GM12878 (cell line): ENCODE measurements at regions of chr13 and their contacts with region 1.

Region 1: GRCh38 chr13:113296842-113297369 is at the start of gene LAMP1:
- DNase-seq: peak; percentile 87
- ATAC-seq: peak; percentile 84
- H3K4me3 ChIP-seq: peak within 1 kb of the TSS; percentile 85
- H3K27ac ChIP-seq: peak within 1 kb of the TSS; percentile 87
- H3K4me1 ChIP-seq: no peaks in the 10 kb centered on the region
- H3K27me3 ChIP-seq: peaks cover 0 to 2% of the 10 kb centered on the region in 2 experiments; a peak in 2 of 4 replicates
- CTCF ChIP-seq: no peak
- EP300 ChIP-seq: peak in 1 of 2 experiments; percentile 91; a peak in 2 of 4 replicates
- POLR2A ChIP-seq: peak; percentile 89
- RAD21 ChIP-seq: peak; percentile 29; the same call in 1 of the 2 replicates
- polyA plus RNA-seq, gene LAMP1: 2.5 to 8.4 TPM

Region 2: DNA sequence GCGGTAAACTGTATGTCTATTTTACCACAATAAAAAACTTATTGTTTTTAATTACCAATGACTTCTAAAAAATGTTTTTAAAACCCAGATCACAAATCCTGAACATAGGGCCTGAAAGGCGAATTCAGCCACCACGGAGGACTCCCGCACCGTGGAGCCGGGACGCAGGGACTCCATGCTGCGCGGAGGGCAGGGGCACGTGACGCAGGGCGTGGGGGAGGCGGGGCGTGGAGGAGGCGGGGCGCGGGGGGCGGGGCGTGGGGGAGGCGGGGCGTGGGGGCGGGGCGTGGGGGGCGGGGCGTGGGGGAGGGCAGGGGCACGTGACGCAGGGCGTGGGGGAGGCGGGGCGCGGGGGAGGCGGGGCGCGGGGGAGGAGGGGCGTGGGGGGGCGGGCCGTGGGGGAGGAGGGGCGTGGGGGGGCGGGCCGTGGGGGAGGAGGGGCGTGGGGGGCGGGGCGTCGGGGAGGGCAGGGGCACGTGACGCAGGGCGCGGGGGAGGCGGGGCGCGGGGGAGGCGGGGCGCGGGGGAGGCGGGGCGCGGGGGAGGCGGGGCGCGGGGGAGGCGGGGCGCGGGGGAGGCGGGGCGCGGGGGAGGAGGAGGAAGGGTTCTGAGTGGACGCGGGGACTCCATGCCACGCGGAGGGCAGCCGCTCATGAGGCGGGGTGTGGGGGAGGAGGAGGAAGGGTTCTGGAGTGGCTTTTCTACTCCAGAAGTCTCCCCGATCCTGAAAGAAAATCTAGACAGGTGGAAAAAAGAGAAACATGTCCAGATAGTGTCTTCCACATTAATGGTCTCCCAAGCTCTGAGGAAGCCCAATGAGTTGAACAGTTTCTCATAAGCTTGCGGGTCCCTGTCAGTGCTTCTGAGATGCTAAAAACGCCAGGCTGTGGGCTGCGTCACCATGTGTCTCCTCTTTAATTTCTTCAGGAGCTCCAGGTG is 142.8 kb before region 1 on chr13:
- CTCF ChIA-PET with region 1: no interaction called
- POLR2A ChIA-PET with region 1: no interaction called
- RAD21 ChIA-PET with region 1: no interaction called
- SMC1A ChIA-PET with region 1: no interaction called
- in situ Hi-C with region 1: no loop called
- intact Hi-C with region 1: no loop called
- DNase-seq: peak; percentile 3
- ATAC-seq: peak; percentile 88
- H3K4me3 ChIP-seq: peak overlapping the region; percentile 46
- H3K27ac ChIP-seq: no peak overlapping the region
- H3K4me1 ChIP-seq: peaks cover 8% of the 10 kb centered on the region
- H3K27me3 ChIP-seq: peaks cover 0 to 5% of the 10 kb centered on the region in 2 experiments; a peak in 3 of 4 replicates
- CTCF ChIP-seq: no peak
- EP300 ChIP-seq: no peak
- POLR2A ChIP-seq: peak; percentile 76
- RAD21 ChIP-seq: no peak

Region 3: DNA sequence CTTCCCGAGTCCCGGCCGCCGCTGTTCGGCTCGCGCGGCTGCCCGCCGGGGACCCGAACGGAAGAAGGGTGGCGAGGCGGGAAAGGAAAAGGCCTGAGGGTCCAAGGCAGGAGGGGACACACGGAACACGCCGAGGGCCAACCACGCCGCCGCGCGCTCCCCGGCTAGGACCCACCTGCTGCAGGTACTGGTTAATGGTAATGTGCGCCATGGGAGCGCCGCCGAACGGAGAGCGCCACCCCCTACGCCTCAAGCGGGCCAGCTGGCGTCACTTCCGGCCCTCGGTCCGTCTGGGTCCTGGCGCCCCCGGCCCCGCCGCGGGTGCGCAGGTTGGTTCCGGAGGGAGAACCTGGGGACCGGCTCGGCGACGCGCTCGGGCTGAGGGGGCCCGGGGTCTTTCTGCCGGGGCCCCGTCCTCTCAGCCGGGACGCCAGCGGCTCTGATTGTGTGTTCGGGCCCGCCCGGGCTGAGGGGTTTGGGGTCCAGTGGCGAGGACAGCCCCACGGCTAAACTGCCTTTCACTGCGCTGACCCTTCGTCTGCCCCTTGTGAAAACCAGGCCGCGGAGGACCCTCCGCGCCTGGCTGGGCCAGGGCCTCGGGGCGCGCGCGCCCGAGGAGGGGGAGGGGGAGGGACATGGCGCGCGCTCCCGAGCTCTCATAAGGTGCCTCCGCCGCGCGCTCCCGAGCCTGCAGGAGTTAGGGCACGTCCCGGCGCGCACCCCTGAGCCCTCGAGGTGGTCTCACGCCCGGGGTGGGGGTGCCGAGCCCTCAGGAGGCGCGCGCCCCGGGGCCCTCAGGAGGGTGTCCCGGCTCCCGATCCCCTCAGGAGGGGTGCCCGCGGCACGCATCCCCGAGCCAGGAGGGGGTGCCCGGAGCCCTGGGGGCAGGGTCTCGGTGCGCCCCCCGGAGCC is 88.2 kb before region 1 on chr13 and contains the start of gene PCID2:
- CTCF ChIA-PET with region 1: interaction called, 3 read pairs
- POLR2A ChIA-PET with region 1: interaction called, 5 read pairs
- RAD21 ChIA-PET with region 1: no interaction called
- SMC1A ChIA-PET with region 1: interaction called, 3 read pairs
- in situ Hi-C with region 1: no loop called
- intact Hi-C with region 1: loop called (anchors 1 kb)
- DNase-seq: peak; percentile 48
- ATAC-seq: peak; percentile 85
- H3K4me3 ChIP-seq: peak within 1 kb of the TSS; percentile 87
- H3K27ac ChIP-seq: peak within 1 kb of the TSS; percentile 95
- H3K4me1 ChIP-seq: peaks cover 6% of the 10 kb centered on the region
- H3K27me3 ChIP-seq: no peaks in the 10 kb centered on the region
- CTCF ChIP-seq: 0 out of 6 replicates have a peak, but pooled peaks of 1 of the 3 experiments have one; percentile 2
- EP300 ChIP-seq: no peak
- POLR2A ChIP-seq: peak; percentile 89
- RAD21 ChIP-seq: no peak
- polyA plus RNA-seq, gene PCID2: 65.4 to 71.8 TPM

Region 4: DNA sequence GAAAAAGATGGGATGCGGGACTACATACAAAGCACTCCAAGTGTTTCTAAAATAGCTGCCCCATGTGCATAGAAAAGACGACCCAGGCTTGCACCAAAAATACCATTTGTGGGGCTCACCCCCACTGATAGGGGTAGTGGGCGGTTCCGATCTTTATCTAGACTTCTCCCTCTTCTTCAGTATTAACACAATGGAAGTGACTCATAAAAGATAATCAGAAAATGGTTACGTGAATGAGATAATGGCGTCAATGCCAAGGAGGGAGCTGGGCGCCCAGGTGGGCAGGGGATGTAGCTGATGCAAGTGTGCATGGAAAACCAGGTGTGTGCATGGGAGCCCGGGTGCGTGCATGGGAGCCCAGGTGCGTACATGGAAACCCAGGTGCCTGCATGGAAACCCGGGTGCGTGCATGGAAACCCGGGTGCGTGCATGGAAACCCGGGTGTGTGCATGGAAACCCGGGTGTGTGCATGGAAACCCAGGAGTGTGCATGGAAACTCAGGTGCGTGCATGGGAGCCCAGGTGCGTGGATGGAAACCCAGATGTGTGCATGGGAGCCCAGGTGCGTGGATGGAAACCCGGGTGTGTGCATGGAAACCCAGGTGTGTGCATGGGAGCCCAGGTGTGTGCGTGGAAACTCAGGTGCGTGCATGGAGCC is 32.9 kb after region 1 on chr13:
- CTCF ChIA-PET with region 1: no interaction called
- POLR2A ChIA-PET with region 1: no interaction called
- RAD21 ChIA-PET with region 1: no interaction called
- SMC1A ChIA-PET with region 1: no interaction called
- in situ Hi-C with region 1: no loop called
- intact Hi-C with region 1: no loop called
- DNase-seq: no peak
- ATAC-seq: no peak
- H3K4me3 ChIP-seq: no peak overlapping the region
- H3K27ac ChIP-seq: no peak overlapping the region
- H3K4me1 ChIP-seq: no peaks in the 10 kb centered on the region
- H3K27me3 ChIP-seq: no peaks in the 10 kb centered on the region
- CTCF ChIP-seq: no peak
- EP300 ChIP-seq: no peak
- POLR2A ChIP-seq: no peak
- RAD21 ChIP-seq: no peak

Region 5: DNA sequence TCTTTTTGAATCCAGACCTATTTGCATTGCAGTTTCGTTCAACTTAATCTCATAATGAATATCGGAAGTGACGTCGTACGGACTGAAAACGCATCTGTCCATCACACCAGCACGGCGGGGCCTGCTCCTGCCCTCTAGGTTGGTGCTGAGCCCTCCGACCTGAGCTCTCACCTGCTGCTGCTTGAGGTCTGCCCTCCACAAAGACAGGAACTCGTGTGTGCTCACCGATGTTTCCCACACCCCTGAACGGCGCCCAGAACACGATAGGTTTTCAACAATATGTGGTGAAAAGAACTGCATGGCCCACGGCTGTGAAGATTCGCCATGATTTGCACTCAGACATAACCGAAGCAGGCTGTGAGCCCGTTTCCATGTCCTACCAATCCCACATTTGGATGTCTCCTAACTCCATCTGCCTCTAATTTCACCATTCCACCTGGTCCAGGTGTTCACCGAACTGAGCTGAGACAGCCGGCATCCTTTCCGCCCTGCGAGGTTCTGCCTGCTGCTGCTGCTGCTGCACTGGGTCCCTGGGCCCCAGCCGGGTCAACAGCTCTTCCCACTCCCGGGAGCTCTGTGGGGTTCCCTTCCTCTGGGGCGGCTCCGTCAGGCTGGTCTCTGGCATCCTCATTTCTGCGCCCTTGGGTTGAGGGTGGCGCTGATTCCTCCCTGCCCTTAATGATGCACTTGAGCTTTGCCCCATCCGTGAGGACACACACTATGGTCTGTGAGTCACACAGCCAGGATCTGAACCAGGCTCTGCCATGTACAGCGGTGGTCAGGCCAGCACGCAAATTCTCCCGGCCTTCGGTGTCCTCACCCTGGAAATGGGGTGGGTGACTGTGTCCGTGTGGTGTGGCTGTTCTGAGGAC is 46.1 kb after region 1 on chr13:
- CTCF ChIA-PET with region 1: no interaction called
- POLR2A ChIA-PET with region 1: no interaction called
- RAD21 ChIA-PET with region 1: no interaction called
- SMC1A ChIA-PET with region 1: no interaction called
- in situ Hi-C with region 1: no loop called
- intact Hi-C with region 1: no loop called
- DNase-seq: no peak
- ATAC-seq: no peak
- H3K4me3 ChIP-seq: no peak overlapping the region
- H3K27ac ChIP-seq: no peak overlapping the region
- H3K4me1 ChIP-seq: no peaks in the 10 kb centered on the region
- H3K27me3 ChIP-seq: no peaks in the 10 kb centered on the region
- CTCF ChIP-seq: no peak
- EP300 ChIP-seq: no peak
- POLR2A ChIP-seq: no peak
- RAD21 ChIP-seq: no peak

Region 6: GRCh38 chr13:113393563-113394338 is 96.8 kb after region 1 on chr13:
- CTCF ChIA-PET with region 1: no interaction called
- POLR2A ChIA-PET with region 1: no interaction called
- RAD21 ChIA-PET with region 1: no interaction called
- SMC1A ChIA-PET with region 1: no interaction called
- in situ Hi-C with region 1: no loop called
- intact Hi-C with region 1: loop called (anchors 1 kb)
- DNase-seq: peak; percentile 1
- ATAC-seq: peak; percentile 99
- H3K4me3 ChIP-seq: peak overlapping the region; percentile 87
- H3K27ac ChIP-seq: peak overlapping the region; percentile 9; the same call in 1 of the 2 replicates
- H3K4me1 ChIP-seq: no peaks in the 10 kb centered on the region
- H3K27me3 ChIP-seq: no peaks in the 10 kb centered on the region
- CTCF ChIP-seq: peak; percentile 66 to 77 (median 66); a peak in 5 of 6 replicates
- EP300 ChIP-seq: no peak
- POLR2A ChIP-seq: peak; percentile 50; the same call in 1 of the 2 replicates
- RAD21 ChIP-seq: peak; percentile 81

Region 7: DNA sequence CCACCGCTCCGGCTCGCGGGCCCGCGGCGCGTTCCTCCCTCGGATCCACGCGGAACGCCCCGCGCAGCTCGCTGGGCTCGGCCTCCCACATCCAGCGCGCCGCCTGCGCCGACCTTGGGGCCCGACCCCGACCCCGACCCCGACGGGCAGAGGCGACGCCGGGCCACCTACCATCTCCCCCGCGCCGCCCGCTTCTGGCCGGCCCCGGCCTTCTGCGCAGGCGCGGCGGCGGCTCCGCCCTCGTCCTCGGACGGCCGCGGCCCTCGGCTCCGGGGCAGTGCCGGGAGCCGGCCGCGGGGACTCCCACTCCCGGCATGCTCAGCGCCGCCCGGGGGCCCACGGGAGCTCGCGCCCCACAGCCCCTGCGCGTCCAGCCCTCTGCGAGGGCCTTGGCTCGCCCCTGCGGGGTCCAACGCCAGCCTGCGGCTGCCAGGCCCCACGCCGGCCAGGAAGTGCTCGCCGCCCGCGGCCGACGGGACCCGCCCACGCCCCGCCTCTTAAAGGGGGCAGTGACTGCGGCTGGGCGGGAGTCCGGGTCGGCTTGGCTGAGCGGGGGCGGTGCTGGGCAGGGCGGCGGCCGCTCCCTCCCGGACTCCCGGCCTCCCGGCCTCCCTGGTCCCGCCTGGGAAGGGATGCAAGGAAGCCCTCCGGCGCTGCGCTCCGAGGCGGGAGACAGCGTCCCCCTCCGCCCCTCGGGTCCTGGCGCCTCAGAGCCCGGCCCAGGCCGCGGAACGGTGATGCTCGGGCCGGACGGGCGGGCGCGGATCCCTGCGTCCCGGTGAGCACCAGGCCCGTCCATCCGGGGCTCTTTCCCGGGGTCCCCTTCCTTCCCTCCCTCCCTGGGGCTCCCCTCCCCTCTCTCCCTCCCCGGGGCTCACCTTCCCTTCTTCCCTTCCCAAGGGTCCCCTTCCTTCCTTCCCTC is 193.9 kb after region 1 on chr13 and contains the start of gene DCUN1D2:
- CTCF ChIA-PET with region 1: no interaction called
- POLR2A ChIA-PET with region 1: interaction called, 3 read pairs
- RAD21 ChIA-PET with region 1: no interaction called
- SMC1A ChIA-PET with region 1: no interaction called
- in situ Hi-C with region 1: no loop called
- intact Hi-C with region 1: loop called (anchors 5 kb)
- DNase-seq: peak; percentile 55
- ATAC-seq: peak; percentile 88
- H3K4me3 ChIP-seq: peak within 1 kb of the TSS; percentile 68
- H3K27ac ChIP-seq: peak within 1 kb of the TSS; percentile 72
- H3K4me1 ChIP-seq: peaks cover 28% of the 10 kb centered on the region
- H3K27me3 ChIP-seq: no peaks in the 10 kb centered on the region
- CTCF ChIP-seq: no peak
- EP300 ChIP-seq: no peak
- POLR2A ChIP-seq: peak; percentile 87
- RAD21 ChIP-seq: no peak
- polyA plus RNA-seq, gene DCUN1D2: 2.5 to 3.0 TPM

Region 8: GRCh38 chr13:113584205-113584869 is 287.4 kb after region 1 on chr13 and contains the start of gene TFDP1:
- CTCF ChIA-PET with region 1: no interaction called
- POLR2A ChIA-PET with region 1: no interaction called
- RAD21 ChIA-PET with region 1: no interaction called
- SMC1A ChIA-PET with region 1: no interaction called
- in situ Hi-C with region 1: no loop called
- intact Hi-C with region 1: loop called (anchors 10 kb)
- DNase-seq: peak; percentile 63
- ATAC-seq: peak; percentile 85
- H3K4me3 ChIP-seq: peak within 1 kb of the TSS; percentile 85
- H3K27ac ChIP-seq: peak within 1 kb of the TSS; percentile 71
- H3K4me1 ChIP-seq: peaks cover 9% of the 10 kb centered on the region
- H3K27me3 ChIP-seq: no peaks in the 10 kb centered on the region
- CTCF ChIP-seq: no peak
- EP300 ChIP-seq: no peak
- POLR2A ChIP-seq: peak; percentile 71
- RAD21 ChIP-seq: no peak
- polyA plus RNA-seq, gene TFDP1: 64.0 to 95.8 TPM